Mammary epithelial cell (primary cell): ENCODE measurements at regions of chr13 and their contacts with region 1.

Region 1: DNA sequence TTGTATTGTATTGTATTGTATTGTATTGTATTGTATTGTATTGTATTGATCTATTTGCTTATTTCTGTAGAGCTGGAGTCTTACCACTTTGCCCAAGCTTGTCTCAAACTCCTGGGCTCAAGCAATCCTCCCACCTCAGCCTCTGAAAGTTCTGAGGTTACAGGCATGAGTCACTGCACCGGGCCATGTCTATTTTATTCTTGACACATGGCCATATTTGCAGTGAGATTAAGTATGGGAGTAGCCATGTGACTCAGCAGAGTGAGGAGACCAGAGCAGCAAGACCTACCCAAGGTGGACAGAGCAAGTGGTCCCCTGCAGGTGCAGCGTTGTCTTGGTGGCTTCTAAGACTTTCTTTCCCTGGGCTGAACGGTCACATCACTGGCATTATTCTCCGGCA is 49.1 kb upstream of the UBAC2 start:
- DNase-seq: peak; percentile 92
- H3K4me3 ChIP-seq: peak overlapping the region in 2 of 3 experiments; percentile 6 to 24
- H3K27ac ChIP-seq: peak overlapping the region; percentile 96
- H3K4me1 ChIP-seq: peaks cover 20% of the 10 kb centered on the region
- H3K27me3 ChIP-seq: no peaks in the 10 kb centered on the region
- CTCF ChIP-seq: no peak

Region 2: DNA sequence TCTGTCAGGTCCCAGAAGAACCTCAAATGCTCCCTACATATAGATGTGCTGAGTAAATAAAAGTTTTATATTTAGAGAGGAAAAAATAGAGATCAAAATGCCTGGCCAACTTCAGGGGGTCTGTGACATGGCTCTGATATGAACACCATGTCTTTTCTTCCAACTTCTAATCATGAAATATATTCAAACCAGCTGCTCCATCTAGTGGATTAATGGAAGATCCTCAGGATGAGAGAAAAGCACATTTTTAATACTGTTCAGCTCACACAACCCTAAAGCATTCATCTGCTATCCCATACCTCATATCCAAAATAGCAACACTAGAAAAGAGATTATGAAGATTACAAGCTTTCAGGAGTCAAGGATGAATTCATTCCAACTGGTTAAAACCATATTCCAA is 117.7 kb before region 1 on chr13:
- CTCF ChIA-PET with region 1: no interaction called
- dilution Hi-C with region 1: no loop called
- in situ Hi-C with region 1: no loop called
- intact Hi-C with region 1: no loop called
- DNase-seq: peak; percentile 16
- H3K4me3 ChIP-seq: no peak overlapping the region
- H3K27ac ChIP-seq: no peak overlapping the region
- H3K4me1 ChIP-seq: peaks cover 17% of the 10 kb centered on the region
- H3K27me3 ChIP-seq: no peaks in the 10 kb centered on the region
- CTCF ChIP-seq: peak; percentile 60 to 66

Region 3: GRCh38 chr13:99067160-99067985 is 84.1 kb before region 1 on chr13:
- CTCF ChIA-PET with region 1: no interaction called
- dilution Hi-C with region 1: no loop called
- in situ Hi-C with region 1: no loop called
- intact Hi-C with region 1: loop called (anchors 5 kb)
- DNase-seq: peak; percentile 82
- H3K4me3 ChIP-seq: no peak overlapping the region
- H3K27ac ChIP-seq: no peak overlapping the region
- H3K4me1 ChIP-seq: peaks cover 34% of the 10 kb centered on the region
- H3K27me3 ChIP-seq: no peaks in the 10 kb centered on the region
- CTCF ChIP-seq: no peak

Region 4: GRCh38 chr13:99093997-99094396 is 57.5 kb before region 1 on chr13:
- CTCF ChIA-PET with region 1: no interaction called
- dilution Hi-C with region 1: loop called (anchors 5 kb)
- in situ Hi-C with region 1: no loop called
- intact Hi-C with region 1: no loop called
- DNase-seq: peak; percentile 4
- H3K4me3 ChIP-seq: no peak overlapping the region
- H3K27ac ChIP-seq: no peak overlapping the region
- H3K4me1 ChIP-seq: no peaks in the 10 kb centered on the region
- H3K27me3 ChIP-seq: no peaks in the 10 kb centered on the region
- CTCF ChIP-seq: no peak

Region 5: GRCh38 chr13:99200432-99201167 is 49.1 kb after region 1 on chr13 and contains the start of gene UBAC2:
- CTCF ChIA-PET with region 1: no interaction called
- dilution Hi-C with region 1: loop called (anchors 5 kb)
- in situ Hi-C with region 1: no loop called
- intact Hi-C with region 1: no loop called
- DNase-seq: peak; percentile 94
- H3K4me3 ChIP-seq: peak within 1 kb of the TSS; percentile 83 to 98 (median 84)
- H3K27ac ChIP-seq: peak within 1 kb of the TSS; percentile 79
- H3K4me1 ChIP-seq: peaks cover 23% of the 10 kb centered on the region
- H3K27me3 ChIP-seq: no peaks in the 10 kb centered on the region
- CTCF ChIP-seq: no peak
- total RNA-seq, gene UBAC2: 48.2 to 57.7 TPM

Region 6: DNA sequence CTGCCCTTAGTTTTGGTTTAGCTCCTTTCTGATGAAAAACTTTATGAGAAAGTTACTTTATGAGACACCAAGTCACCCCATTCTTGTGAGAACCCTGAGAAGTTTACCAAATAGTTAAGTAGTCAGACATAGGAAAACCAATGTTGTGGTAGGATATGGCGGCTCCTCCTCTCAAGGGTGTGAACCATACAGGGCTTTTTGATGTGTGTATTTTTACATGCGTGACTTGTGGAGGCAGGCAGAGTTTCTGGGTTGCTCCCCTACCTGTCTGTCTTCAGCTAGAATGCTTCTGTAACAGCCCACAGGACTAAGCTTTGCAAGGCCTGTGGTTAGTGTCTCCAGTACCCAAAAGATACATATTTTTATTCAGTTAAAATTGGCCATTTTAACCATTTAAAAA is 67.5 kb after region 1 on chr13:
- CTCF ChIA-PET with region 1: no interaction called
- dilution Hi-C with region 1: no loop called
- in situ Hi-C with region 1: no loop called
- intact Hi-C with region 1: no loop called
- DNase-seq: no peak
- H3K4me3 ChIP-seq: no peak overlapping the region
- H3K27ac ChIP-seq: no peak overlapping the region
- H3K4me1 ChIP-seq: peaks cover 5% of the 10 kb centered on the region
- H3K27me3 ChIP-seq: no peaks in the 10 kb centered on the region
- CTCF ChIP-seq: no peak

Region 7: GRCh38 chr13:99805361-99805760 is 653.8 kb after region 1 on chr13:
- CTCF ChIA-PET with region 1: no interaction called
- dilution Hi-C with region 1: no loop called
- in situ Hi-C with region 1: no loop called
- intact Hi-C with region 1: no loop called
- DNase-seq: no peak
- H3K4me3 ChIP-seq: no peak overlapping the region
- H3K27ac ChIP-seq: no peak overlapping the region
- H3K4me1 ChIP-seq: no peaks in the 10 kb centered on the region
- H3K27me3 ChIP-seq: no peaks in the 10 kb centered on the region
- CTCF ChIP-seq: no peak